ENCODE measurements at regions of chr20 and their contacts with region 1.

Region 1: DNA sequence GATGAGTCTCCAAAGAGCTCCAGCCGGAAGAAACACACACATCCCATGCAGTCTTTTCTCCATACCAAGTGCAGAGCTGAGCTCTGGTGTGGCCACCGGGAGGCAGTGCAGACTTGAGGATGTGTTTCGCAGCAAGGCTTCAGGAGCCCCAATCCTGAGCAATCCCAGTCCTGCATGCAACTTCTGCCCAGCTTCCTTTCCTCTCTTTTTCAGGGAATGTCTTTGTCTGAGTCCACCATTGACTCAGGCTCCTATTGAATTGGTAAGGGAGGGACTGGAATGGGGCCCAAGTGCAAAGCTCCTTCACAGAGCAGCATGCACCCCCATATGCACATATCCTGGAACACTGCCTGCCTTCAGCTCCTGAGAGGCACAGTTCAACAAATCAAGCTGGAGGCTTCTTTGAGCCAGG is 50.5 kb upstream of the ASIP start:
- DNase-seq: peak; percentile 88
- H3K4me3 ChIP-seq: no peak overlapping the region
- H3K27ac ChIP-seq: no peak overlapping the region
- H3K4me1 ChIP-seq: peaks cover 19% of the 10 kb centered on the region
- H3K27me3 ChIP-seq: no peaks in the 10 kb centered on the region
- CTCF ChIP-seq: peak; percentile 95

Region 2: DNA sequence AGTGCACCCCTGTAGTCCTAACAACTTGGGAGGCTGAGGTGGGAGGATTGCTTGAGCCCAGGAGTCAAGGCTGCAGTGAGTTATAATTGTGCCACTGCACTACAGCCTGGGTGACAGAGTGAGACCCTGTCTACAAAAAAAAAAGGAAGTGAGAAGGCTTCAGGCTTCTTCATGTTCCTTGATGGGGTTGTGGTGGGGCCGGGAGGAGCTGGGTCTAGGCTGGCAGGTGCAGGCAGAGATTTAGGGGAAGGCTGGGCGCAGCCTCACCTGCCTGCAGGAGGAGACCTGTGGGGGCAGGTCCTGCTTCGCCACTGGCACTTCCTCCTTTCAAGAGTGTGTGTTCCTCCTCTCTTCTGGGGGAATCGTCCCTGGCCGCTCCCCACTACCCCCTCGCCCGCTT is 315.6 kb before region 1 on chr20:
- CTCF ChIA-PET with region 1: no interaction called
- POLR2A ChIA-PET with region 1: no interaction called
- intact Hi-C with region 1: no loop called
- DNase-seq: no peak
- H3K4me3 ChIP-seq: no peak overlapping the region
- H3K27ac ChIP-seq: no peak overlapping the region
- H3K4me1 ChIP-seq: no peaks in the 10 kb centered on the region
- H3K27me3 ChIP-seq: no peaks in the 10 kb centered on the region
- CTCF ChIP-seq: no peak

Region 3: GRCh38 chr20:34022154-34022838 is 168.4 kb before region 1 on chr20:
- CTCF ChIA-PET with region 1: no interaction called
- POLR2A ChIA-PET with region 1: no interaction called
- intact Hi-C with region 1: no loop called
- DNase-seq: peak; percentile 54
- H3K4me3 ChIP-seq: no peak overlapping the region
- H3K27ac ChIP-seq: peak overlapping the region; percentile 17
- H3K4me1 ChIP-seq: peaks cover 26% of the 10 kb centered on the region
- H3K27me3 ChIP-seq: no peaks in the 10 kb centered on the region
- CTCF ChIP-seq: peak; percentile 64

Region 4: DNA sequence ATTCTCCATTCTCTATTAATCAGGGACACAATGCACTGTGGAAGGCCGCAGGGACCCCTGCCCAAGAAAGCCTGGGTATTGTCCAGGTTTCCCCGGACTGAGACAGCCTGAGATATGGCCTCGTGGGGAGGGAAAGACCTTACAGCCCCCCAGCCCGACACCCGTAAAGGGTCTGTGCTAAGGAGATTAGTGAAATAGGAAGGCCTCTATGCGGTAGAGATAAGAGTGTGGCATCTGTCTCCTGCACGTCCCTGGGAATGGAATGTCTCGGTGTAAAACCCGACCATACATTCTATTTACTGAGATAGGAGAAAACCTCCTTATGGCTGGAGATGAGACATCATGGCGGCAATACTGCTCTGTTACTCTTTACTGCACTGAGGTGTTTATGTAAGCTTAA is 62.9 kb before region 1 on chr20:
- CTCF ChIA-PET with region 1: no interaction called
- POLR2A ChIA-PET with region 1: no interaction called
- intact Hi-C with region 1: no loop called
- DNase-seq: no peak
- H3K4me3 ChIP-seq: no peak overlapping the region
- H3K27ac ChIP-seq: no peak overlapping the region
- H3K4me1 ChIP-seq: no peaks in the 10 kb centered on the region
- H3K27me3 ChIP-seq: no peaks in the 10 kb centered on the region
- CTCF ChIP-seq: no peak

Region 5: GRCh38 chr20:34302723-34303528 is 112.2 kb after region 1 on chr20 and contains the start of gene AHCY:
- CTCF ChIA-PET with region 1: interaction called, 5 read pairs
- POLR2A ChIA-PET with region 1: no interaction called
- intact Hi-C with region 1: loop called (anchors 5 kb)
- DNase-seq: peak; percentile 98
- H3K4me3 ChIP-seq: peak within 1 kb of the TSS; percentile 69
- H3K27ac ChIP-seq: peak within 1 kb of the TSS; percentile 93
- H3K4me1 ChIP-seq: peaks cover 15% of the 10 kb centered on the region
- H3K27me3 ChIP-seq: no peaks in the 10 kb centered on the region
- CTCF ChIP-seq: no peak
- total RNA-seq, gene AHCY: 284 and 292 TPM in 2 replicates

Region 6: GRCh38 chr20:34350095-34350494 is 159.4 kb after region 1 on chr20:
- CTCF ChIA-PET with region 1: no interaction called
- POLR2A ChIA-PET with region 1: interaction called, 24 read pairs
- intact Hi-C with region 1: no loop called
- DNase-seq: no peak
- H3K4me3 ChIP-seq: no peak overlapping the region
- H3K27ac ChIP-seq: no peak overlapping the region
- H3K4me1 ChIP-seq: no peaks in the 10 kb centered on the region
- H3K27me3 ChIP-seq: no peaks in the 10 kb centered on the region
- CTCF ChIP-seq: no peak

Region 7: GRCh38 chr20:34516247-34517113 is 325.8 kb after region 1 on chr20 and contains the start of gene DYNLRB1:
- CTCF ChIA-PET with region 1: interaction called, 7 read pairs
- POLR2A ChIA-PET with region 1: interaction called, 3 read pairs
- intact Hi-C with region 1: loop called (anchors 10 kb)
- DNase-seq: peak; percentile 97
- H3K4me3 ChIP-seq: peak within 1 kb of the TSS; percentile 91
- H3K27ac ChIP-seq: peak within 1 kb of the TSS; percentile 87
- H3K4me1 ChIP-seq: peaks cover 3% of the 10 kb centered on the region
- H3K27me3 ChIP-seq: no peaks in the 10 kb centered on the region
- CTCF ChIP-seq: no peak
- total RNA-seq, gene DYNLRB1: 142 and 144 TPM in 2 replicates

Region 8: DNA sequence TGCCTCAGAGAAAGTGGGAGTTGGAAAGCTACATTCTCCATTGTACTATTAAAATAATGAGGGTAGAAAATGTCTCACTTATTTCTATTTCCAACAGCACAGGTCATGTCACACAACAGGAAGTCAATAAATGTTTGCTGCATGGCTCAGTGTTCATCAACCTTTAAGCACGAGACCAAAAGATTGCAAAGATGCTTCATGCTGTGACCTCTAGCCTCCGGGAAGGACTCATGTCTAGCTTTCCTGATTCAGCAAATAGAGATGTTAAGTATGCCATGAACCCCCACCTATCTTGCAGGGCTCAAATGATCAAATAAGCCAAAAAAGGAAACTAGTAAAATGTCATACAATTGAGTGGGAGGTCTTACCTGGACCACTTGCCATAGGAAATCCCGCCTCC is 577.4 kb after region 1 on chr20:
- CTCF ChIA-PET with region 1: interaction called, 18 read pairs
- POLR2A ChIA-PET with region 1: no interaction called
- intact Hi-C with region 1: loop called (anchors 10 kb)
- DNase-seq: no peak
- H3K4me3 ChIP-seq: no peak overlapping the region
- H3K27ac ChIP-seq: no peak overlapping the region
- H3K4me1 ChIP-seq: no peaks in the 10 kb centered on the region
- H3K27me3 ChIP-seq: no peaks in the 10 kb centered on the region
- CTCF ChIP-seq: no peak

Measured in A673 (cell line).